Naive thymus-derived CD4-positive, alpha-beta T cell (primary cell): ENCODE measurements at regions of chr9 and their contacts with region 1.

Region 1: DNA sequence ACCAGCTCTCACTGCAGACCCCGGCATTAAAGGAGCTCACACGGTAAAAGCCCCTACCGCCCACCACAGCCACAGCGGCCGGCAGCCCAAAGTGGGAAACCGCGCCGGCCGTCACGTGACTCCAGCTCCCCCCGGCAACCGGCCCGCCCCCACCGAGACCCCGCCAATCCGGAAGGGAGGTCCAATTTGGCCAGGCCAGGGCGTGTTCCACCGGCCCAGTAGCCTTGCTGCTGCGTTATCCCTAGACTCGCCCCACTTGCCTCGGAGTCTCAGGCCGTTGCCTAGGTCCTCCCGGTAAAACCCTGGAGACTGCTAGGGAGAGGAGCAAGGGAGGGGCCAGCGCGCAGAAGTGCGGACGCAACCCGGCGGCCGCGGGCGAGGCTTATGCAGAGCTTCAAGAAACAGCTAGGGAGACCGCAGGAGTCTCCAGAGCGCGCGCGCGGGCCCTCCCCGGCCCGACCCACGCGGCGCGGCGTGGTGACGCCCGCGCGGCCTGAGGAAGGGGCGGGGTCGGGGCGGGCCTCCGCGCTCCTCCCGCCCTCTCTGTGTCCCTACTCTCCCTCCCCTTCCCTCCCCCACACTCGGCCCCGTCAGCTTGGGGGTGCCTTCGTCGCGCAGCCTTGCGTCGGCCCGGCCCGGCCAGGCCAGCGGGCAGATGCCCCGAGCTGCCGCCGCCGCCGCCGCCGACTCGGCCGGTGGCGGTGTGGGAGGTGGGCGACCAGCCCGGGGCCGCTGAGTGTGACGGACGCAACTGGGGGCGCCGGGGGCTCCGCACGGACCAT is at the start of gene RIC1:
- DNase-seq: peak; percentile 85 to 91 (median 88)
- ATAC-seq: peak; percentile 94
- H3K4me3 ChIP-seq: peak within 1 kb of the TSS; percentile 88
- H3K4me3 Mint-ChIP-seq: peak within 1 kb of the TSS; percentile 94 to 100 (median 99)
- H3K27ac ChIP-seq: peak within 1 kb of the TSS; percentile 89
- H3K27ac Mint-ChIP-seq: peak within 1 kb of the TSS; percentile 94 to 99 (median 98)
- H3K4me1 ChIP-seq: peaks cover 10 to 49% of the 10 kb centered on the region in 2 donors
- H3K4me1 Mint-ChIP-seq: peaks cover 43 to 77% (median 65%) of the 10 kb centered on the region in 7 donors
- H3K27me3 ChIP-seq: no peaks in the 10 kb centered on the region
- H3K27me3 Mint-ChIP-seq: no peaks in the 10 kb centered on the region
- total RNA-seq, gene RIC1: 20.2 to 28.2 (median 25.9) TPM

Region 2: DNA sequence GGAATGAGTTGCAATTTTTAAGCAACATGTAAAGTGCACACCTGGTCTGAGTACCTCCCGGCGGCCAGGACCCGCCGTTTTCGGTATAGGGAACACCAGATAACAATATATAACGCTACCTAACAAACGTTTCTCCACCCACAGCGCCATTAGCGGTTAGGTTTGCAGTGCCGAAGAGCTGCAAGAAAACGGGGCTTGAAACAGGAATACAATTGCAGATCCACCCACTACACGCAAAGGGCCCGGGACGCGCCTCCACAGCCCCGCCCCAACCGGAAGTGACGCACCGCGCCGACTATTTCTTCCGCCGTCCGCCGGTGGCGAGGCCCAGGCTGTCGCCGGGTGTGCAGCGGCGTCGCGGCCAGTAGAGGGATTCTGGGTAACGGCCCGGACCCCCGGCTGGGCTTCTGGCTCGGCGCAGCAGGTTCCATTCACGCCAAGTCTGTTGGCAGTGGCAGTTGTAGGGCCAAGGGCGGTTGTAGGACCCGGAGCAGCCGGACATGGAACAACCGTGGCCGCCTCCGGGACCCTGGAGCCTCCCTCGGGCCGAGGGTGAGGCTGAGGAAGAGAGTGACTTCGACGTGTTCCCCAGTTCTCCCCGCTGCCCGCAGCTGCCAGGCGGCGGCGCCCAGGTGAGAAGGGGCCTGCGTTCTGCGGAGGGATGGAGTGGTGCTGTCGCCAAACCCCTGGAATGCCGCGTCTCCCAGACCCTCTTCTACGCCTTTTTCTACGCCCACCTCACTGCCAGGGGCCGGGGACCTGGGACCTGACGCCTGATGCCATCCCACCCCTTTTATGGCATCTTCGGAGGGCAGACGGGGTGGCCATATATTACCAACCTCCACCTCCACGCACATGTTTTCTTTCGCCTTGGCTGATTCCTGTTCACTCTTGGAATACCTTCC is 949.2 kb before region 1 on chr9 and contains the start of gene CDC37L1:
- CTCF ChIA-PET with region 1: no interaction called
- POLR2A ChIA-PET with region 1: interaction called, 5 read pairs
- intact Hi-C with region 1: loop called (anchors 1 kb)
- DNase-seq: peak; percentile 98 to 100 (median 99)
- ATAC-seq: peak; percentile 98
- H3K4me3 ChIP-seq: peak within 1 kb of the TSS; percentile 72
- H3K4me3 Mint-ChIP-seq: no peak within 1 kb of the TSS
- H3K27ac ChIP-seq: peak within 1 kb of the TSS; percentile 95
- H3K27ac Mint-ChIP-seq: no peak within 1 kb of the TSS
- H3K4me1 ChIP-seq: peaks cover 15 to 19% of the 10 kb centered on the region in 2 donors
- H3K4me1 Mint-ChIP-seq: peaks cover 9 to 19% (median 17%) of the 10 kb centered on the region in 7 donors
- H3K27me3 ChIP-seq: no peaks in the 10 kb centered on the region
- H3K27me3 Mint-ChIP-seq: no peaks in the 10 kb centered on the region
- total RNA-seq, gene CDC37L1: 13.4 to 28.0 (median 22.9) TPM

Region 3: GRCh38 chr9:5336688-5337087 is 292.0 kb before region 1 on chr9:
- CTCF ChIA-PET with region 1: no interaction called
- POLR2A ChIA-PET with region 1: no interaction called
- intact Hi-C with region 1: loop called in 1 of 2 experiments (anchors 10 kb)
- DNase-seq: peak in 7 of 9 donors; percentile 47 to 70 (median 60)
- ATAC-seq: peak; percentile 62
- H3K4me3 ChIP-seq: peak overlapping the region; percentile 27
- H3K4me3 Mint-ChIP-seq: peak overlapping the region; percentile 64 to 87 (median 80)
- H3K27ac ChIP-seq: peak overlapping the region; percentile 64
- H3K27ac Mint-ChIP-seq: peak overlapping the region; percentile 79 to 95 (median 91)
- H3K4me1 ChIP-seq: peaks cover 24 to 28% of the 10 kb centered on the region in 2 donors
- H3K4me1 Mint-ChIP-seq: peaks cover 20 to 64% (median 50%) of the 10 kb centered on the region in 7 donors
- H3K27me3 ChIP-seq: no peaks in the 10 kb centered on the region
- H3K27me3 Mint-ChIP-seq: no peaks in the 10 kb centered on the region

Region 4: DNA sequence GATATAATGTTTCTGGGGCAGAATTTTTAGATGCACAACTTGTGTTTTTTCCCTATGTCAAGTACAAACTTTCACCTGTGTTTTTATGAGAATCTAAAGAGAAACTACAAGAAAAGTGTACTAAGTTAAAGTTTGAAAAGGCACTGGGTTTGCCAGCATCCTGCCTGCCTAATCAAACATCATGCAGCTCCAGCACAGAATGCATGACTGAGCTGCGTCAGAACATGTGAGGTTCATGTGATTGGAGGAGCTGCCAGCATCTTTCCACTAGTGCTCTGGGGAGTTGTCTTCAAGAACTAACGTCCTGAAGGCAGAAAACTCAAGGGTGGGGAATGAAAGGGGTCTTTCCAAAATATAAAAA is 45.9 kb before region 1 on chr9:
- CTCF ChIA-PET with region 1: no interaction called
- POLR2A ChIA-PET with region 1: interaction called, 23 read pairs
- intact Hi-C with region 1: loop called in 1 of 2 experiments (anchors 1 kb)
- DNase-seq: peak in 7 of 9 donors; percentile 55 to 81 (median 68)
- ATAC-seq: peak; percentile 82
- H3K4me3 ChIP-seq: no peak overlapping the region
- H3K4me3 Mint-ChIP-seq: peak overlapping the region in 7 of 10 donors; percentile 0 to 43 (median 39)
- H3K27ac ChIP-seq: peak overlapping the region; percentile 43
- H3K27ac Mint-ChIP-seq: peak overlapping the region; percentile 48 to 98 (median 86)
- H3K4me1 ChIP-seq: peaks cover 24 to 30% of the 10 kb centered on the region in 2 donors
- H3K4me1 Mint-ChIP-seq: peaks cover 28 to 79% (median 62%) of the 10 kb centered on the region in 7 donors
- H3K27me3 ChIP-seq: no peaks in the 10 kb centered on the region
- H3K27me3 Mint-ChIP-seq: no peaks in the 10 kb centered on the region

Region 5: DNA sequence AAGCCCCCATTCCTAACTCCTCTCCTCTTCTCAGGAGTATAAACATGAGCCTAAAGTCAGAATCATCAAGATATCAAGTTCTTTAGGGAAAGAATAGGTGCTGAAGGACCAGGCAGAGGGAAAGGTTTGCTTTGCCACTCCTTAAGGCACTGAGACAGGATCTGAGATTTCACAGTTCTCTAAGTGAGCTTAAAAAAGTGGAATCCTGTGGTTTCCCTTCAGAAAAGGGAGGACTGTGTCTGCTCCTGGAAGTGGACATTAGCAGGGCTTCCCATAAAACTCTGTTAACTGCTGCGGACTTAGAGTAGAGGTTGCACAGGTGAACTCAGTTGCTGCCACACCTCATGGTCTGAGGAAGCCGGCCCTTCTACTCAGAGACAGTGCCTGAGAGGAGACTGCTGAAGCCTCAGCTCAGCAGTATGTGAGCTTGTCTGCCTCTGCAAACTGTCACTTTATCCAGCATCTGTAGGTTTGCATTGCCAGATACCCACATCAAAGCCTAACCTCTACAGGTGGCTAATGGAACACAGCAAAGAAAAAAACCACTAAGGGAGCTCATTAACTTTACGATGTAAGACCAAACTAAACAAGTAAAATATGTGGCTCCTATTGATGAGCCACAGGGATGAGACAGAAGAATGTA is 43.1 kb after region 1 on chr9:
- CTCF ChIA-PET with region 1: no interaction called
- POLR2A ChIA-PET with region 1: interaction called, 5 read pairs
- intact Hi-C with region 1: loop called (anchors 1 to 5 kb)
- DNase-seq: peak in 7 of 9 donors; percentile 45 to 65 (median 52)
- ATAC-seq: peak; percentile 85
- H3K4me3 ChIP-seq: no peak overlapping the region
- H3K4me3 Mint-ChIP-seq: peak overlapping the region; percentile 3 to 62 (median 33)
- H3K27ac ChIP-seq: peak overlapping the region; percentile 1
- H3K27ac Mint-ChIP-seq: peak overlapping the region; percentile 3 to 87 (median 17)
- H3K4me1 ChIP-seq: peaks cover 5 to 19% of the 10 kb centered on the region in 2 donors
- H3K4me1 Mint-ChIP-seq: peaks cover 29 to 64% (median 57%) of the 10 kb centered on the region in 7 donors
- H3K27me3 ChIP-seq: no peaks in the 10 kb centered on the region
- H3K27me3 Mint-ChIP-seq: no peaks in the 10 kb centered on the region

Region 6: DNA sequence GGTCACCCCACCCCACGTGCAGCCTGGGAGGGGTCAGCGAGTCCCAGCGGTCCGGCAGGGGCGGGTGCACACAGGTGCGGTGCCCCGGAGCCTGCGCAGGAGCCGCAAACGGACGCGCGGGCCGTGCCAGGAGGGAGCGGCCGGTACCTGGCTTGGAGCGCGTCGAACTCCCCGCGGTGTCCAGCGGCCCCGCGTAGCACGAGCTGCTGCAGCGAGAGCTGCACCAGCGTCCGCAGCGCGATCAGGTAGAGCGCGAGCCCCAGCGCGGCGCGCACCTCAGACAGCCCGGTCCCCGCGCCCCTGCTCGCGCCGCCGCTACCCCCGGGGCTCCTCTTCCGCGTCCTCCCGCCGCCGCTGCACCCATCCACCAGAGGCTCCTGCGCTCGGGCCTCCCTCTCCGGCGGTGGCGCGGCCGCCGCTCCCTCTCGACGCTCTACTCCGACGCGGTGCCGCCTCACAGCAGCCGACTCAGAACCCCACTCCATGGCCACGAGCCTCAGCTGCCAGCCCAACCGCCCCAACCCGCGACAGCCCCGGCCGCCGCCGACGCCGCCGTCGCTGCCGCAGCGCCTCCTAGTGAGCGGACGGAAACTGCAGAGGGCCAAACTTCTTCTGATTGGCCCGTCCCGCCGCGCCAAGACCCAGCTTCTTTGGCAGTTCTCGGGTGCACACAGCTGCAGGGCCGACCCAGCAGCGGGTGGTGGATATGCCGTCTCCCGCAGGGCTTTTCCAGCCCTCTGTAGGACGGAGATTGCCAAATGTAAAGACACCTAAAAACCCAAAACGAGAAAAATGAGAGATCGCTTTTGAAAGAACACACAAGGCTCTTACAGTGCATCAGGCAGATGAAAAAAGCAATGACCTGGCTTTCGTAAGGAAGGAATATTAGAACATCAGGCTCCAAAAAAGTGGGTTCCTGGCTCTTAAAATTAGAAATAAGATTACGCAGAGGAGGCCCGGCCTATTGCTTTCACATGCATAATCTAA is 204.1 kb after region 1 on chr9 and contains the start of gene ERMP1:
- CTCF ChIA-PET with region 1: interaction called, 3 read pairs
- POLR2A ChIA-PET with region 1: interaction called, 10 read pairs
- intact Hi-C with region 1: loop called (anchors 2 kb)
- DNase-seq: peak; percentile 83 to 94 (median 91)
- ATAC-seq: peak; percentile 95
- H3K4me3 ChIP-seq: peak within 1 kb of the TSS; percentile 85
- H3K4me3 Mint-ChIP-seq: peak within 1 kb of the TSS; percentile 91 to 99 (median 95)
- H3K27ac ChIP-seq: peak within 1 kb of the TSS; percentile 60
- H3K27ac Mint-ChIP-seq: peak within 1 kb of the TSS; percentile 79 to 96 (median 89)
- H3K4me1 ChIP-seq: peaks cover 25 to 33% of the 10 kb centered on the region in 2 donors
- H3K4me1 Mint-ChIP-seq: peaks cover 28 to 71% (median 60%) of the 10 kb centered on the region in 7 donors
- H3K27me3 ChIP-seq: no peaks in the 10 kb centered on the region
- H3K27me3 Mint-ChIP-seq: no peaks in the 10 kb centered on the region
- total RNA-seq, gene ERMP1: 9.5 to 37.1 (median 20.0) TPM

Region 7: GRCh38 chr9:6681147-6681956 is 1052.6 kb after region 1 on chr9:
- CTCF ChIA-PET with region 1: no interaction called
- POLR2A ChIA-PET with region 1: no interaction called
- intact Hi-C with region 1: loop called in 1 of 2 experiments (anchors 2 kb)
- DNase-seq: peak; percentile 71 to 95 (median 90)
- ATAC-seq: peak; percentile 90
- H3K4me3 ChIP-seq: peak overlapping the region; percentile 89
- H3K4me3 Mint-ChIP-seq: peak overlapping the region; percentile 88 to 98 (median 95)
- H3K27ac ChIP-seq: peak overlapping the region; percentile 91
- H3K27ac Mint-ChIP-seq: peak overlapping the region; percentile 97 to 100 (median 99)
- H3K4me1 ChIP-seq: peaks cover 0 to 6% of the 10 kb centered on the region in 2 donors
- H3K4me1 Mint-ChIP-seq: peaks cover 7 to 31% (median 20%) of the 10 kb centered on the region in 7 donors
- H3K27me3 ChIP-seq: no peaks in the 10 kb centered on the region
- H3K27me3 Mint-ChIP-seq: no peaks in the 10 kb centered on the region